HepG2 (cell line): ENCODE measurements at regions of chr3 and their contacts with region 1.

Region 1: DNA sequence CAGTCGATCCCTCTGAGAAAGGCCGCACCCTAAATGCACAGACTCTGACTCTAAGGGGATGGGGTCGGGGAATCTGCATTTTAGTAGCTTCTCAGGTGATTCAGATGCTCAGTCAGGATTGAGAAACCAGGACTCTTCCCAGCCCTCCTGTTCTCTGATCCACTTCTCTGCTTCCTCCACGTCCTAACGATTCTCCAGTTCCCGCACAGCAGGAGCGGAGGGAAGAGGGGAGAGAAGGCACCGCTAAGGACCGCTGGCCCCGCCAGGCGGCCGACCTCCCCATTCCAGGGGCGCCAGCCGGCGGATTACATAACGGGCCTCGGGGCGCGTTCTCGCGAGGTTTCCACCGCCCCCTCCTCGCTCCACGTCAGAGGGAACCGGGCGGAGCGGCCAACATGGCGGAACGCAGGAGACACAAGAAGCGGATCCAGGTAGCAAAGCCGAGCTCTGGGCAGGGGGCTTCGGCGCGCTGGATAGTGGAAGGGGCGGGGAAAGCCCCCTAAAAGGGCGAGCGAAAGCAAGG is at the start of gene SEC62:
- DNase-seq: peak; percentile 81
- ATAC-seq: peak; percentile 95
- H3K4me3 ChIP-seq: peak within 1 kb of the TSS; percentile 75 to 99 (median 95)
- H3K27ac ChIP-seq: peak within 1 kb of the TSS; percentile 72
- H3K4me1 ChIP-seq: peaks cover 40% of the 10 kb centered on the region
- H3K27me3 ChIP-seq: peaks cover 0 to 5% of the 10 kb centered on the region in 2 experiments; a peak in 1 of 5 replicates
- CTCF ChIP-seq: peak; percentile 84
- EP300 ChIP-seq: 0 out of 4 replicates have a peak, but pooled peaks of 1 of the 2 experiments have one; percentile 5
- POLR2A ChIP-seq: peak; percentile 72 to 85
- RAD21 ChIP-seq: peak; percentile 59; the same call in 1 of the 2 replicates
- total RNA-seq, gene SEC62: 53.5 and 68.7 TPM in 2 replicates

Region 2: GRCh38 chr3:169764452-169765274 is 201.8 kb before region 1 on chr3 and contains the start of gene TERC:
- CTCF ChIA-PET with region 1: no interaction called
- POLR2A ChIA-PET with region 1: interaction called, 4 read pairs
- in situ Hi-C with region 1: no loop called
- intact Hi-C with region 1: loop called (anchors 1 kb)
- DNase-seq: peak; percentile 79
- ATAC-seq: peak; percentile 85
- H3K4me3 ChIP-seq: peak within 1 kb of the TSS; percentile 62 to 80 (median 72)
- H3K27ac ChIP-seq: peak within 1 kb of the TSS; percentile 79
- H3K4me1 ChIP-seq: no peaks in the 10 kb centered on the region; the same call in 1 of the 2 replicates
- H3K27me3 ChIP-seq: 0 out of 5 replicates have a peak, but pooled peaks cover 0 to 4% of the 10 kb centered on the region in 2 experiments
- CTCF ChIP-seq: no peak
- EP300 ChIP-seq: no peak
- POLR2A ChIP-seq: peak; percentile 82 to 96
- RAD21 ChIP-seq: no peak
- total RNA-seq, gene TERC: 8.4 and 74.6 TPM in 2 replicates

Region 3: DNA sequence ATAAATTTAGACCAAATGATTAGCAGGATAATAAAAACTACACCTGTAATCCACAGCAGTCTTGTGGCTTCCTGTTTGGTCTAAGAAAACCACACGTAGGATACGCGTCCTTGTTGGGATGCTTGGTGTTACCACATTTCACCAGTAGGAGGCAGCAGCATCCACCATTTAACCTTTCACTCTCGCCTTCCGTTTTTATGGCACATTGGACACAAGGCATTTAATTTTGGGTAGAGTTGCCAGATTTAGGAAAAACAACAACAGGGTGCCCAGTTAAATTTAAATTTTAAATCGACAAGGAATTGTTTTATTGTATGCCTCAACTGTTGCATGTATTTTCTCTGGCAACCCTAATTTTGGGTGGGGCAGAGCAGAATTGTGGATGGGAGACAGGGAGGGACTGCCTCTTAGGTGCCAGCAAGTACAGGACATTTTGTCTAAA is 103.0 kb before region 1 on chr3:
- CTCF ChIA-PET with region 1: no interaction called
- POLR2A ChIA-PET with region 1: no interaction called
- in situ Hi-C with region 1: no loop called
- intact Hi-C with region 1: loop called (anchors 1 kb)
- DNase-seq: peak; percentile 55
- ATAC-seq: peak; percentile 82
- H3K4me3 ChIP-seq: no peak overlapping the region
- H3K27ac ChIP-seq: no peak overlapping the region
- H3K4me1 ChIP-seq: no peaks in the 10 kb centered on the region
- H3K27me3 ChIP-seq: no peaks in the 10 kb centered on the region
- CTCF ChIP-seq: peak; percentile 89
- EP300 ChIP-seq: no peak
- POLR2A ChIP-seq: no peak
- RAD21 ChIP-seq: peak; percentile 64

Region 4: GRCh38 chr3:169980055-169980454 is 13.6 kb after region 1 on chr3:
- CTCF ChIA-PET with region 1: no interaction called
- POLR2A ChIA-PET with region 1: interaction called, 16 read pairs
- in situ Hi-C with region 1: no loop called
- intact Hi-C with region 1: no loop called
- DNase-seq: peak; percentile 47
- ATAC-seq: no peak; the same call in 2 of the 3 replicates
- H3K4me3 ChIP-seq: no peak overlapping the region
- H3K27ac ChIP-seq: no peak overlapping the region
- H3K4me1 ChIP-seq: peaks cover 7% of the 10 kb centered on the region; the same call in 1 of the 2 replicates
- H3K27me3 ChIP-seq: no peaks in the 10 kb centered on the region; a peak in 1 of 5 replicates
- CTCF ChIP-seq: no peak
- EP300 ChIP-seq: no peak
- POLR2A ChIP-seq: no peak
- RAD21 ChIP-seq: no peak

Region 5: DNA sequence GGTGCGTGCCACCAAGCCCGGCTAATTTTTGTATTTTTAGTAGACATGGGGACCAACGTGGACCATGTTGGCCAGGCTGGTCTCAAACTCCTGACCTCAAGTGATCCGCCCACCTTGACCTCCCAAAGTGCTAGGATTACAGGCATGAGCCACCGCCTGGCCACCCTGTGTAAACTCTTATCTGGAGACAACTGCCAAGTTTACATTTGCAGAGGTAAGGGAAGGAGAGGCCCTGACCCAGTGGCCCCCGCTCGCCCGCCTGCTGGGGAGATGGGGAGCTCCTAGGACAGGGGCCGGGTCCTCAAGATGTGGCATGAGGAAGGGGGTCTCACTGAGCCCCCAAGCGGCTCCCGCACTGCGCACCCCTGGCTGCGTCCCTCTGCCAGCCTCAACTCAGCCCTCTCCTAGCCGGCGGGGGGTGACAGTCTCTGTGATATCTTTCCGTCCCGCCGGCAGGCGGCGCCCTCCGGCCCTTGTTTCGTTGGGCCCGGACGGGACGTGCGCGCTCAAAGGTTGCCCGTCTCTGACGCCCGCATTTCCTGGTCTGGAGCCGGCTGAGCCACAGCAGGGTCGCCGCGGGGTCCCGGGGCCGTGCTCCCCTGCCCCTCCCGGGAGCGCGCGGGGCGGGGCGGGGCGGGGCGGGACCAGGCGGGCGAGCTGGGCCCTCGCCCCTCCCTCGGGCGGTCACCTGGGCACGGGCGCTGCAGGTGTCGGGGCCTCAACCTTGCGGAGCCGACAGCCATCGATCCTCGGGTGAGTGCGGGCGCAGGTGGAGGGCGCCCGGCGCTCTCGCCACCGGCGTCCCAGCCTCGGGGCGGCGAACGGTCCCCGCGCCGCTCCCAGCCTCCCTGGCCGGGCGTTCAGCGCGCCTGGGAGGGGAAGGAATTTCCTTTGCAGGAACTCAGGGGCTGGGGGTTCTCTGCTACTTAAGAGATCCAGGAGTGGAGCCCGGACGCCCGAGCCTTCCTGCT is 71.3 kb after region 1 on chr3 and contains the start of gene GPR160:
- CTCF ChIA-PET with region 1: no interaction called
- POLR2A ChIA-PET with region 1: no interaction called
- in situ Hi-C with region 1: no loop called
- intact Hi-C with region 1: loop called (anchors 2 kb)
- DNase-seq: peak; percentile 68
- ATAC-seq: peak; percentile 91
- H3K4me3 ChIP-seq: peak within 1 kb of the TSS; percentile 53 to 85 (median 80)
- H3K27ac ChIP-seq: peak within 1 kb of the TSS; percentile 34
- H3K4me1 ChIP-seq: no peaks in the 10 kb centered on the region
- H3K27me3 ChIP-seq: no peaks in the 10 kb centered on the region; a peak in 1 of 5 replicates
- CTCF ChIP-seq: peak; percentile 91
- EP300 ChIP-seq: peak in 1 of 2 experiments; percentile 43; a peak in 1 of 4 replicates
- POLR2A ChIP-seq: no peak; a peak in 1 of 4 replicates
- RAD21 ChIP-seq: peak; percentile 90
- total RNA-seq, gene GPR160: 12.1 and 14.0 TPM in 2 replicates

Region 6: DNA sequence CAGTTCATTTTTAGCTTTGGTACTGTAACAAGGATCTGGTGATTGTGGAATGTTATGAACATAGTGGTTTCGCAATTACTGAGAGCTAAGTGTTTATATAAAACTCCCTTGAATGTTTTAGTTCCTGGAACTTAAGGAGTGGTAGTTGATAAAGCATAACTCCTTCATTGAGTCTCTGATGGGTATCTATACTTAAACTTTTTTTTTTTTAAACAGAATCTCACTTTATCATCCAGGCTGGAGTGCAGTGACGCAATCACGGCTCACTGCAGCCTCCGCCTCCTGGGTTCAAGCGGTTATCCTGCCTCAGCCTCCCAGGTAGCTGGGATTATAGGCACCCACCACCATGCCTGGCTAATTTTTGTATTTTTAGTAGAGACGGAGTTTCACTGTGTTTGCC is 267.0 kb after region 1 on chr3:
- CTCF ChIA-PET with region 1: no interaction called
- POLR2A ChIA-PET with region 1: no interaction called
- in situ Hi-C with region 1: no loop called
- intact Hi-C with region 1: no loop called
- DNase-seq: peak; percentile 5
- ATAC-seq: no peak
- H3K4me3 ChIP-seq: no peak overlapping the region
- H3K27ac ChIP-seq: no peak overlapping the region
- H3K4me1 ChIP-seq: peaks cover 14% of the 10 kb centered on the region
- H3K27me3 ChIP-seq: no peaks in the 10 kb centered on the region
- CTCF ChIP-seq: no peak
- EP300 ChIP-seq: no peak
- POLR2A ChIP-seq: no peak
- RAD21 ChIP-seq: no peak